CD4-positive, alpha-beta memory T cell (primary cell): ENCODE measurements at regions of chr11 and their contacts with region 1.

Region 1: GRCh38 chr11:73177778-73178577 is 35.9 kb upstream of the FCHSD2 start:
- DNase-seq: peak; percentile 71 to 77 (median 73)
- H3K4me3 ChIP-seq: no peak overlapping the region
- H3K4me3 Mint-ChIP-seq: no peak overlapping the region
- H3K27ac ChIP-seq: no peak overlapping the region
- H3K27ac Mint-ChIP-seq: peak overlapping the region in 2 of 7 donors; percentile 35 to 43
- H3K4me1 ChIP-seq: peaks cover 10% of the 10 kb centered on the region
- H3K4me1 Mint-ChIP-seq: peaks cover 0 to 9% (median 3%) of the 10 kb centered on the region in 4 donors
- H3K27me3 ChIP-seq: no peaks in the 10 kb centered on the region
- H3K27me3 Mint-ChIP-seq: peaks cover 0 to 3% of the 10 kb centered on the region in 2 donors

Region 2: GRCh38 chr11:72683782-72684200 is 494.2 kb before region 1 on chr11:
- CTCF ChIA-PET with region 1: interaction called, 13 read pairs
- POLR2A ChIA-PET with region 1: no interaction called
- intact Hi-C with region 1: loop called (anchors 1 kb)
- DNase-seq: peak; percentile 43 to 58 (median 53)
- H3K4me3 ChIP-seq: no peak overlapping the region
- H3K4me3 Mint-ChIP-seq: no peak overlapping the region
- H3K27ac ChIP-seq: no peak overlapping the region
- H3K27ac Mint-ChIP-seq: peak overlapping the region in 2 of 7 donors; percentile 13 to 57
- H3K4me1 ChIP-seq: no peaks in the 10 kb centered on the region
- H3K4me1 Mint-ChIP-seq: peaks cover 11 to 23% (median 15%) of the 10 kb centered on the region in 4 donors
- H3K27me3 ChIP-seq: no peaks in the 10 kb centered on the region
- H3K27me3 Mint-ChIP-seq: no peaks in the 10 kb centered on the region

Region 3: DNA sequence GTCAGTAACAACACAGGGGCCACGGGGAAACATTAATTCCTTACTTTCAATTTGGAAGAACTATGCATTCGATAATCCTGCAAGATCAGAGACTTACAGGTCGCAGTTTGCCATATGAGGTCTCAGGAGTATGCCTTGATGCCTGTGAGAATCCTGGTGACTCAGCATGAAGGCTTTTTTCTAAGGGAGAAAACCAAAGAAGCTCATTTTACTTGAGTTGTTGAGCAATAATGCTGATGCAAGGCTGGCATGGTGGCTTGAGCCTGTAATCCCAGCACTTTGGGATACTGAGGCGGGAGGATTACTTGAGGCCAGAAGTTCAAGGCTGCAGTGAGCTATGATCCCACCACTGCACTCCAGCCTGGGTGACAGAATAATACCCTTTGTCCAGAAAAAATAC is 337.2 kb before region 1 on chr11:
- CTCF ChIA-PET with region 1: interaction called, 112 read pairs
- POLR2A ChIA-PET with region 1: no interaction called
- intact Hi-C with region 1: no loop called
- DNase-seq: no peak
- H3K4me3 ChIP-seq: no peak overlapping the region
- H3K4me3 Mint-ChIP-seq: no peak overlapping the region
- H3K27ac ChIP-seq: no peak overlapping the region
- H3K27ac Mint-ChIP-seq: no peak overlapping the region
- H3K4me1 ChIP-seq: no peaks in the 10 kb centered on the region
- H3K4me1 Mint-ChIP-seq: peaks cover 6 to 18% (median 13%) of the 10 kb centered on the region in 4 donors
- H3K27me3 ChIP-seq: no peaks in the 10 kb centered on the region
- H3K27me3 Mint-ChIP-seq: no peaks in the 10 kb centered on the region

Region 4: GRCh38 chr11:72924568-72925190 is 253.3 kb before region 1 on chr11:
- CTCF ChIA-PET with region 1: interaction called, 161 read pairs
- POLR2A ChIA-PET with region 1: interaction called, 5 read pairs
- intact Hi-C with region 1: no loop called
- DNase-seq: peak in 4 of 5 donors; percentile 19 to 39 (median 26)
- H3K4me3 ChIP-seq: no peak overlapping the region
- H3K4me3 Mint-ChIP-seq: no peak overlapping the region
- H3K27ac ChIP-seq: no peak overlapping the region
- H3K27ac Mint-ChIP-seq: peak overlapping the region in 2 of 7 donors; percentile 37 to 69
- H3K4me1 ChIP-seq: no peaks in the 10 kb centered on the region
- H3K4me1 Mint-ChIP-seq: peaks cover 5 to 14% (median 7%) of the 10 kb centered on the region in 4 donors
- H3K27me3 ChIP-seq: no peaks in the 10 kb centered on the region
- H3K27me3 Mint-ChIP-seq: no peaks in the 10 kb centered on the region

Region 5: DNA sequence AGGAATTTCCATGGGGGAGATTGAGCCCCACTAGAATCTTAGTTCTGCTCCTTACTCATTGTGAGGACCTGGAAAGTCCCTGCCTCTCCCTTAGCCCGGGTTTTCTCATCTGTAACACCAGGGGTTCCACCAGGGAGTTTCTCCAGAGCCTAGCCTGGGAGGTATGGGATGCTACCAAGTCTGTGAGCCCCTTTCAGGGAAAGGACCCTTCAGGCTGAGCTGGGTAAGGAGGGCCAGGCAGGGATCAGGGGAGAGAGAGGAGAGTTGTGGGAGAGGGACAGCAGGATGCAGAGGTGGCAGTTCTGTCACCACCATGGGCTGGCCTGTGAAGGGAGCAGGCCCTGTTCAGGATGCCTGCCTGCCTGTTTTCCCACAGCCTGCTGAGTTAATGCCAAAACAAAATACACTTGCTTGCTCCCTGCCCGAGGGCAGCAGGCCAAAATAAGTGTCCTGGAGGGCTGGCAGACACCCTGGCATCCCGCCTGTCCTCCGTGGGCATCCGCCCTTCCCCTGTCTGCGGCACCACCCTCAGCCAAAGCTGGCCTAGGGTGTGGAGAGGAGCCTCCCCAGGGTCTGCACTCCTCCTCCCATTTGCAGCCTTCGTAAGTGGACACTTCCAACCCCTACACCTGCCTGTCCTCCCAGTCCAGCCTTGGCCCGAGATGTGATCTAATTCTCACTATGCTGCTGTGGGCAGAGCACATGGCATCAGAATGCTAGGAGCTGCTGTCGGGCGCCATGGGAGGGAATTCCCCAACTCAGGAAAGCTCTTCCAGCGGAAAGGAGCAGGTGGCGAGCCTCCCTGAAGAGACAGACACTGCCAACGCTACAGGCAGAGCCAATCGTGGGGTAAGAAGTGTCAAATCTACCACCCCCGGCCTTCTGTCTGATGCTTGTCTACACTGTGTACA is 30.0 kb before region 1 on chr11:
- CTCF ChIA-PET with region 1: interaction called, 31 read pairs
- POLR2A ChIA-PET with region 1: interaction called, 27 read pairs
- intact Hi-C with region 1: loop called (anchors 2 kb)
- DNase-seq: no peak
- H3K4me3 ChIP-seq: no peak overlapping the region
- H3K4me3 Mint-ChIP-seq: no peak overlapping the region
- H3K27ac ChIP-seq: no peak overlapping the region
- H3K27ac Mint-ChIP-seq: no peak overlapping the region
- H3K4me1 ChIP-seq: peaks cover 20% of the 10 kb centered on the region
- H3K4me1 Mint-ChIP-seq: peaks cover 19 to 38% (median 24%) of the 10 kb centered on the region in 4 donors
- H3K27me3 ChIP-seq: no peaks in the 10 kb centered on the region
- H3K27me3 Mint-ChIP-seq: no peaks in the 10 kb centered on the region

Region 6: GRCh38 chr11:73215191-73216134 is 37.5 kb after region 1 on chr11:
- CTCF ChIA-PET with region 1: no interaction called
- POLR2A ChIA-PET with region 1: no interaction called
- intact Hi-C with region 1: no loop called
- DNase-seq: no peak
- H3K4me3 ChIP-seq: no peak overlapping the region
- H3K4me3 Mint-ChIP-seq: peak overlapping the region in 1 of 8 donors; percentile 63
- H3K27ac ChIP-seq: no peak overlapping the region
- H3K27ac Mint-ChIP-seq: no peak overlapping the region
- H3K4me1 ChIP-seq: no peaks in the 10 kb centered on the region
- H3K4me1 Mint-ChIP-seq: peaks cover 0 to 16% (median 5%) of the 10 kb centered on the region in 4 donors
- H3K27me3 ChIP-seq: no peaks in the 10 kb centered on the region
- H3K27me3 Mint-ChIP-seq: peaks cover 10 to 16% of the 10 kb centered on the region in 2 donors